Activated CD8-positive, alpha-beta T cell treated with anti-CD3 and anti-CD28 coated beads, Interleukin-2, amount 10 ng/mL, durations not matched to agents 7 days and 5 days (primary cell): ENCODE measurements at regions of chr1 and their contacts with region 1.

Region 1: GRCh38 chr1:33295450-33296081 is 25.3 kb downstream of the A3GALT2 start:
- DNase-seq: peak; percentile 92
- ATAC-seq: peak; percentile 93
- H3K4me3 Mint-ChIP-seq: no peak overlapping the region
- H3K27ac Mint-ChIP-seq: peak overlapping the region; percentile 25
- H3K4me1 Mint-ChIP-seq: peaks cover 22% of the 10 kb centered on the region
- H3K27me3 Mint-ChIP-seq: no peaks in the 10 kb centered on the region

Region 2: GRCh38 chr1:33306648-33307493 is 11.3 kb after region 1 on chr1:
- CTCF ChIA-PET with region 1: interaction called, 24 read pairs
- POLR2A ChIA-PET with region 1: no interaction called
- DNase-seq: no peak
- ATAC-seq: no peak
- H3K4me3 Mint-ChIP-seq: no peak overlapping the region
- H3K27ac Mint-ChIP-seq: no peak overlapping the region
- H3K4me1 Mint-ChIP-seq: peaks cover 26% of the 10 kb centered on the region
- H3K27me3 Mint-ChIP-seq: peaks cover 10% of the 10 kb centered on the region

Region 3: GRCh38 chr1:33338440-33339211 is 43.1 kb after region 1 on chr1:
- CTCF ChIA-PET with region 1: interaction called, 13 read pairs
- POLR2A ChIA-PET with region 1: no interaction called
- DNase-seq: no peak
- ATAC-seq: no peak
- H3K4me3 Mint-ChIP-seq: no peak overlapping the region
- H3K27ac Mint-ChIP-seq: no peak overlapping the region
- H3K4me1 Mint-ChIP-seq: peaks cover 23% of the 10 kb centered on the region
- H3K27me3 Mint-ChIP-seq: no peaks in the 10 kb centered on the region

Region 4: DNA sequence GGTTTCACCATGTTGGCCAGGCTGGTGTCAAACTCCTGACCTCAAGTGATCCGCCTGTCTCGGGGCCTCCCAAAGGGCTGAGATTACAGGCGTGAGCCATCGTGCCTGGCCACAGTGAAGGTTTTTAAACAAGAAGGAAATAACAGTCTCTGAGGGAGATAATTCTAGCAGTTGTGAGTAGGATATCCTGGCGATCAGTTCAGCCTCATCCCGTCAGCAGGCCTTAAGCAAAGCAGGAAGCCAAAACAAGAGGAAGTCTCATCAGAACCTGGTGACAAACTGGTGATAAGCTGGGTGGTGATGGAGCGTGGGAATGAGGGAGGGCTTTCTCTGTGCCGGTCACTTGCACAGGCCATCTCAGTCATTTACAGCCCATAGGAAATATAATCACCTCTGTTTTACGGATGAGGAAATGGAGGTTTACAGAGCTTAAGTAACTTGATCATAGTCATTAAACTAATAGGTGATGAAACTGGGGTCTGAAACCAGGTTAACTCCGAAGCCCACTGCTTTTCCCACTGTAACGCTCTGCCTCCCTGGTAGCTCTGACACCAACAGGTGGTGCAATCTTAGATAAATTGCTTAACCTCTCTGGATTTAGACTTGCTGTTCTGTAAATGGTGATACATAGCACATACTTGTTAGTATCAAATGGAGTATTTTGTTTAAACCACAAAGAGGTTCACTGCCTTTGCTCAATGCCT is 66.1 kb after region 1 on chr1:
- CTCF ChIA-PET with region 1: interaction called, 26 read pairs
- POLR2A ChIA-PET with region 1: no interaction called
- DNase-seq: no peak
- ATAC-seq: no peak
- H3K4me3 Mint-ChIP-seq: no peak overlapping the region
- H3K27ac Mint-ChIP-seq: no peak overlapping the region
- H3K4me1 Mint-ChIP-seq: peaks cover 4% of the 10 kb centered on the region
- H3K27me3 Mint-ChIP-seq: no peaks in the 10 kb centered on the region

Region 5: GRCh38 chr1:33460947-33461629 is 165.5 kb after region 1 on chr1:
- CTCF ChIA-PET with region 1: interaction called, 10 read pairs
- POLR2A ChIA-PET with region 1: no interaction called
- DNase-seq: no peak
- ATAC-seq: no peak
- H3K4me3 Mint-ChIP-seq: no peak overlapping the region
- H3K27ac Mint-ChIP-seq: no peak overlapping the region
- H3K4me1 Mint-ChIP-seq: peaks cover 6% of the 10 kb centered on the region
- H3K27me3 Mint-ChIP-seq: peaks cover 6% of the 10 kb centered on the region